Cardiac septum (tissue), 1 donor: ENCODE measurements at regions of chr11 and their contacts with region 1.

Region 1: DNA sequence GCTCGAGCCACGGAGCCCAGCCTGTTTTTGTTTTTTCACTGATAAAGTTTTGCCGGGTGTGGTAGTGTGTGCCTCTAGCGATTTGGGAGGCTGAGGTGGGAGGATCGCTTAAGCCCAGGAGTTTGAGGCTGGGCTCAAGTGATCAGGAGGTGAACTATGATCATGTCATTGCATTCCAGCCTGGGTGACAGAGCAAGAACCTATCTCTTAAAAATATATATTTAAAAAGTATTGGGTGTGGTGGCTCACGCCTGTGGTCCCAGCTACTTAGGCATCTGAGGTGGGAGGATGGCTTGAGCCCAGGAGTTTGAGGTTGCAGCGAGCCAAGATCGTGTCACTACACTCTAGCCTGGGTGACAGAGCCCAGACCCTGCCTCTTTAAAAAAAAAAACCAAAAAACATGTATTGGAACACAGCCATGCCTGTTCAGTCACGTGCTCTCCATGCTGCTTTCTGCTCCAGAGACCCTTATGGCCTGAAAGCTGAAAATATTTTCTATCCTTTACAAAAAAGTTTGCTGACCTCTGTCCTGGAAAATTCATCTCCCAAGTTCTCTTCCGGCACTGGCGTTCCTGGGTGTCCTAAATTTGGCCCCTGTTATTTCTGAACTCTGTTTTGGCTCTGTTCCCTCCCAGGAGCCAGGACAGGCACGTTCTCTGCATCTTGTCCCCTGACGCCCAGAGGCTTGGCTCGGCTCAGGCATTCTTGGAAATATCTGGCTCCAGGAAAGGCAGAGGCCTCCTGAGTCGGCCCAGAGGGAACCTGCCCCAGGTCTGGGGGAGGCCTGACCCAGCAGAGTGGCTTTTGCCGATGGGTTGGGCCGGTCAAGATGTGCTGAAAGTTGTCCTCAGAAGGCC is 61.3 kb upstream of the PPP6R3 start:
- DNase-seq: peak; percentile 87

Region 2: DNA sequence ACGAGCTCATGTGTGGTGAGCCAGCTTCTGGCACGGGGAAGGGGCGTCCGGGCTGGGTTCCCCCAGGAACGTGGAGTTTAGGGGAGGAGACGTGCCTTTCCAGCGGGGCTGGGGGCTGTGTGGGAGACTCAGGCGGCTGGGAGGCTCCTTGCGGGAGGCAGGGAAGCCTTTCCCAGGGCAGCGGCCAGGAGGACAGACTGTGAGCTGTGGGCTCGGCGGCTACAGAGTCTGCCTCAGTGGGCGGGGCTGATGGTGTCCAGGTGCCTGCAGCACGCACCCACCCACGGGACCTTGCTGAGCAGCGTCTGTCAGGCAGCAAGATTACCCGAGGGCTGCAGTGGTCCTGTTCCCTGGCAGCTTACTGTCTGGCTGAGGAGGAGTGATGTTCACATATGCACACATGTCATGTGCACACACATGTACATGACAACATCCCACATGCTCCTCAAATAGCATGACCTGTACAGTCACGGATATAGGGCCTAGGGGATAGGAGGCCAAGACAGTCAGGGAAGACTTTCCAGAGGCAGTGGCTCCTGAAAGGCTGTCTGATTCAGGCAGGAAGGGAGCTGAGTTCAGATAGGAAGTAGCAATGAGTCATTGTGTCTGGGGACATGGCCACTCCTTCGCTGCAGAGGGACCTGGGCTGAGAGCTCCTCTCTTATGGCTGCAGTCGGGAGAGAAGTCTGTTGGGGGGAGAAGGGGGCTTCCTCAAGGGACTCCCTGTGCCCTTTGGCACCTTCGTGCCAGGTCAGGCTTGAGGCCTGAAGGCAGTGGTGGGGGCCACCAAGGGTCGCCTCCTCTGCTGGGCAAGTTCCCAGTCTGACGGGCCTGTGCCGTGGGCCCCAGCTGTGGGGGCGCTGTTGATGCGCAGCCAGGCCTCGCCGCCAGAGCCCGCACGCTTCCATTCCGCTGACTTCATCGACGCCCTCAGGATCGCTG is 38.0 kb after region 1 on chr11:
- intact Hi-C with region 1: loop called (anchors 5 kb)
- DNase-seq: peak; percentile 84